Activated CD8-positive, alpha-beta T cell treated with anti-CD3 and anti-CD28 coated beads, Interleukin-2, amount 10 ng/mL, durations not matched to agents 7 days and 5 days (primary cell): ENCODE measurements at regions of chr3 and their contacts with region 1.

Region 1: DNA sequence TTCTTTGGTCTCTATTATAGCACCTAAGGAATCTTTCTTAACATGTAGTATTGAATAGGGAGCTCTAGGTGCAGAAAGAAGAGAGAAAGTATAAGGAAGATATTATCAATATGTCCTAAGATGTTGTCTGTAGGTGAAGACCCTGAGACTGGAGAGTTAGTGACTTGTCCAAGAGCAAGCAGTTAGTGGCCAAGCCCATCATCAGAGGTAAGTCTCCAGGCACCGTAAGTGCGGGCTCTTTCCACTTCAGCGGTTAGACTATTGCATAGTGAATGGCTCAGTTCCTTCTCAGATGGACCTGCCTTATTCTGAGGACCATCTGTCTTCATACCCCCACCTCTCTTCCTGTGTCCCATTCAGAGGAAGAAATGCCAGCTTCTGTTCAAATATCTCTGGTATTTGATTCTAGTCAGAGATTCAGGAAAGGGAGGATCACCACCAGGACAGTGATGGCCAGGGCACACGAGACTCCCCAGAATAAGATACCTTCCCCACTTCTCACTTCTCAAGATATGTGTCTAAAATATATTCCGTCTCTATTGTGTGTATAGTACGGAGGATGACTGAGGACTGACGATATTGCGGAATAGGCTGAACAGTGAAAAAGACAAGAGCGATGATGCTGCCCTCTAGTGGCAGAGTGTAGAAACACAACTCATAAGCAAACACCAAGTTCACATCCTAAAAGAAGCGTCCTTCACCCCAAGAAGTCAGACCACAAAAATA is 19.1 kb upstream of the ADGRG7 start:
- DNase-seq: peak; percentile 78
- ATAC-seq: peak; percentile 78
- H3K4me3 Mint-ChIP-seq: peak overlapping the region; percentile 21
- H3K27ac Mint-ChIP-seq: no peak overlapping the region
- H3K4me1 Mint-ChIP-seq: peaks cover 2% of the 10 kb centered on the region
- H3K27me3 Mint-ChIP-seq: peaks cover 10% of the 10 kb centered on the region

Region 2: GRCh38 chr3:100316641-100317069 is 273.6 kb before region 1 on chr3:
- CTCF ChIA-PET with region 1: interaction called, 42 read pairs
- POLR2A ChIA-PET with region 1: no interaction called
- DNase-seq: peak; percentile 66
- ATAC-seq: peak; percentile 82
- H3K4me3 Mint-ChIP-seq: no peak overlapping the region
- H3K27ac Mint-ChIP-seq: no peak overlapping the region
- H3K4me1 Mint-ChIP-seq: peaks cover 16% of the 10 kb centered on the region
- H3K27me3 Mint-ChIP-seq: no peaks in the 10 kb centered on the region

Region 3: GRCh38 chr3:100463002-100463401 is 127.3 kb before region 1 on chr3:
- CTCF ChIA-PET with region 1: interaction called, 40 read pairs
- POLR2A ChIA-PET with region 1: no interaction called
- DNase-seq: peak; percentile 50
- ATAC-seq: peak; percentile 87
- H3K4me3 Mint-ChIP-seq: no peak overlapping the region
- H3K27ac Mint-ChIP-seq: no peak overlapping the region
- H3K4me1 Mint-ChIP-seq: peaks cover 8% of the 10 kb centered on the region
- H3K27me3 Mint-ChIP-seq: peaks cover 3% of the 10 kb centered on the region

Region 4: GRCh38 chr3:100561459-100562158 is 28.7 kb before region 1 on chr3:
- CTCF ChIA-PET with region 1: no interaction called
- POLR2A ChIA-PET with region 1: no interaction called
- DNase-seq: no peak
- ATAC-seq: no peak
- H3K4me3 Mint-ChIP-seq: no peak overlapping the region
- H3K27ac Mint-ChIP-seq: no peak overlapping the region
- H3K4me1 Mint-ChIP-seq: no peaks in the 10 kb centered on the region
- H3K27me3 Mint-ChIP-seq: peaks cover 3% of the 10 kb centered on the region

Region 5: GRCh38 chr3:100603469-100603868 is 13.2 kb after region 1 on chr3:
- CTCF ChIA-PET with region 1: interaction called, 47 read pairs
- POLR2A ChIA-PET with region 1: no interaction called
- DNase-seq: no peak
- ATAC-seq: peak; percentile 52
- H3K4me3 Mint-ChIP-seq: peak overlapping the region; percentile 71
- H3K27ac Mint-ChIP-seq: peak overlapping the region; percentile 78
- H3K4me1 Mint-ChIP-seq: peaks cover 39% of the 10 kb centered on the region
- H3K27me3 Mint-ChIP-seq: peaks cover 10% of the 10 kb centered on the region